ENCODE measurements at regions of chr3 and their contacts with region 1.

Region 1: DNA sequence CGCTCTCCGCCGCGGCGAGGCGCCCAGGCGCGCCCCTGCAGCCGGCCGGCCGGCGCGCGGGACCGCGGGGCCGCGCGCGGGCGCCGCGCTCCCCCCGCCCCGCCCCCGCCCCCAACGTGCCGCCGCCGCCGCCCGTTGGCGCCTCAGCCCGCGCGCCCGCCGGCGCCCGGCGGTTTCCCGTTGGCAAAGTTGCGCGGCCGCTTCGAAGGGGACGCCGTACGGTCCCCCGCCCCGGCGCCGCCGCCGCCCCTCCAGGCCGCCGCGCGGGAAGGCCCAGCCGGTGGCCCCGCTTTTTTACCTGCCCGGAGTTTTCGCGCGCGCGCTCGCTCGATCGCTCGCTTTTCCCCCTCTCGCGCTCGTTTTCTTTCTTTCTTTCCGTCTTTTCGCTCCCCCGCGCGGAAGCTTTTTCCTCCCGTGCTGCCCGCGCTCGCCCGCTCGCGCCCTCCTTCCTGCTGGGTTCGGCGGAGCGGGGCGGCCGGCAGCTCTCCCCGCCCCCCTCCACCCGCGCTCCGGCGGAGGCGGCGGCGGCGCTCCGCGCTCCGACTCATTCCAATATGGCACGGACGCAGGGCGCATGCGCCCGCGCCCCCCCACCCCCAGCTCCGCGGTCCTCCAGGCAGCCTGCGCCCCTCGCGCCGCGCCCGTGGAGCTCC is at the start of gene SFMBT1:
- DNase-seq: peak in 8 of 9 donors; percentile 53 to 75 (median 72)
- ATAC-seq: peak; percentile 71
- H3K4me3 ChIP-seq: peak within 1 kb of the TSS; percentile 77
- H3K4me3 Mint-ChIP-seq: peak within 1 kb of the TSS; percentile 92 to 100 (median 97)
- H3K27ac ChIP-seq: peak within 1 kb of the TSS; percentile 86
- H3K27ac Mint-ChIP-seq: peak within 1 kb of the TSS; percentile 91 to 100 (median 99)
- H3K4me1 ChIP-seq: peaks cover 9 to 23% of the 10 kb centered on the region in 2 donors
- H3K4me1 Mint-ChIP-seq: peaks cover 17 to 53% (median 42%) of the 10 kb centered on the region in 7 donors
- H3K27me3 ChIP-seq: no peaks in the 10 kb centered on the region
- H3K27me3 Mint-ChIP-seq: peaks cover 0 to 17% (median 0%) of the 10 kb centered on the region in 5 donors
- total RNA-seq, gene SFMBT1: 28.4 to 47.1 (median 39.0) TPM

Region 2: DNA sequence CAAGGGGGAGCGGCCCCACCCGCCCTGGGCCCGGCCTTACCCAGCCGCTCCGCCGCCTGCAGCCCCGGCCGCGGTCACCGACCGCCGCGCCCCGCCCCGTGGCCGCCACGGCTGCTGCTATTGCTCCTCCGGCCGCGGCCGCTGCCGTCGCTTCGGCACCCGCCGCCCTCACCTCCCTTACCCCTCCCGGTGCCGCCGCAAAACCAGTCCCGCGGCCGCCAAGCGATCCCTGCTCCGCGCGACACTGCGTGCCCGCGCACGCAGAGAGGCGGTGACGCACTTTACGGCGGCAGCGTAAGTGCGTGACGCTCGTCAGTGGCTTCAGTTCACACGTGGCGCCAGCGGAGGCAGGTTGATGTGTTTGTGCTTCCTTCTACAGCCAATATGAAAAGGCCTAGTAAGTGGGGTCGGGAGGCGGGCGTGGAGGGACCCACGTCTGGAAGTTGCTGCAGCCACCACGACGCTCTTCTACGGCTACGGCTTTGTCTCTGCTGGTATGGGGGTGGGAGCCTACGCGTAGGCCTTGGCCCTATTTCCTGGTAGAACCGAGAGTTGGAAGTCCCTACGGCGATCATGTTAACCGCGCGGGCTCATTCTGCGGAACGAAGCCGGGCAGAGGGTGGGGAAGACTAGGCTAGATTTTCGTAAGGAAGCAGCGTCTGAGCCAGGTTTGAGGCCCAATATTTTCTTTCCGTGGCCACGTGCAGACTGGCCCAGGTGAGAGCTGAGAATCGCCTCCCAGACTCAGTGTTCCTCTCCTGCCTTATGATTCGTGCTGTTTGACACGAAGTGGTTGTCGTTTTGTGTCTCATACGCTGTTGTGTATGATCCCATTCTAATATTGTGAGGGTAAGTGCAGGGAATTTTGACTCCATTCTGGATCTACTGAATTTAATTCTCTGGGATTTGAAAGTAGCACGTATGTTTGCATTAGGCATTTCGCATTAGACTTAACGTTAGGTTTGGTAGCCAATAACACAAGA is 359.6 kb before region 1 on chr3 and contains the starts of genes GNL3 and PBRM1:
- CTCF ChIA-PET with region 1: no interaction called
- POLR2A ChIA-PET with region 1: interaction called, 7 read pairs
- intact Hi-C with region 1: loop called in 1 of 2 experiments (anchors 2 kb)
- DNase-seq: peak; percentile 87 to 94 (median 92)
- ATAC-seq: peak; percentile 96
- H3K4me3 ChIP-seq: peak within 1 kb of the TSS; percentile 80
- H3K4me3 Mint-ChIP-seq: peak within 1 kb of the TSS; percentile 95 to 99 (median 98)
- H3K27ac ChIP-seq: peak within 1 kb of the TSS; percentile 89
- H3K27ac Mint-ChIP-seq: peak within 1 kb of the TSS; percentile 93 to 99 (median 98)
- H3K4me1 ChIP-seq: peaks cover 21 to 25% of the 10 kb centered on the region in 2 donors
- H3K4me1 Mint-ChIP-seq: peaks cover 23 to 72% (median 62%) of the 10 kb centered on the region in 7 donors
- H3K27me3 ChIP-seq: no peaks in the 10 kb centered on the region
- H3K27me3 Mint-ChIP-seq: no peaks in the 10 kb centered on the region
- total RNA-seq, gene GNL3: 87.9 to 116 (median 97.2) TPM
- total RNA-seq, gene PBRM1: 58.4 to 83.8 (median 74.2) TPM

Region 3: GRCh38 chr3:52770496-52771333 is 274.9 kb before region 1 on chr3 and contains the start of gene NEK4:
- CTCF ChIA-PET with region 1: no interaction called
- POLR2A ChIA-PET with region 1: interaction called, 8 read pairs
- intact Hi-C with region 1: loop called (anchors 1 to 10 kb)
- DNase-seq: peak; percentile 44 to 86 (median 65)
- ATAC-seq: peak; percentile 89
- H3K4me3 ChIP-seq: peak within 1 kb of the TSS; percentile 83
- H3K4me3 Mint-ChIP-seq: peak within 1 kb of the TSS; percentile 83 to 99 (median 95)
- H3K27ac ChIP-seq: peak within 1 kb of the TSS; percentile 72
- H3K27ac Mint-ChIP-seq: peak within 1 kb of the TSS; percentile 89 to 97 (median 93)
- H3K4me1 ChIP-seq: peaks cover 5 to 16% of the 10 kb centered on the region in 2 donors
- H3K4me1 Mint-ChIP-seq: peaks cover 12 to 34% (median 23%) of the 10 kb centered on the region in 7 donors
- H3K27me3 ChIP-seq: no peaks in the 10 kb centered on the region
- H3K27me3 Mint-ChIP-seq: peaks cover 0 to 12% (median 0%) of the 10 kb centered on the region in 5 donors
- total RNA-seq, gene NEK4: 14.4 to 28.4 (median 21.1) TPM

Region 4: GRCh38 chr3:52934630-52935530 is 110.8 kb before region 1 on chr3:
- CTCF ChIA-PET with region 1: interaction called, 5 read pairs
- POLR2A ChIA-PET with region 1: interaction called, 9 read pairs
- intact Hi-C with region 1: loop called (anchors 1 to 10 kb)
- DNase-seq: peak in 8 of 9 donors; percentile 30 to 58 (median 45)
- ATAC-seq: peak; percentile 97
- H3K4me3 ChIP-seq: no peak overlapping the region
- H3K4me3 Mint-ChIP-seq: peak overlapping the region in 4 of 10 donors; percentile 13 to 69 (median 27)
- H3K27ac ChIP-seq: no peak overlapping the region
- H3K27ac Mint-ChIP-seq: peak overlapping the region in 8 of 9 donors; percentile 7 to 75 (median 53)
- H3K4me1 ChIP-seq: peaks cover 0 to 4% of the 10 kb centered on the region in 2 donors
- H3K4me1 Mint-ChIP-seq: peaks cover 5 to 25% (median 16%) of the 10 kb centered on the region in 7 donors
- H3K27me3 ChIP-seq: no peaks in the 10 kb centered on the region
- H3K27me3 Mint-ChIP-seq: no peaks in the 10 kb centered on the region

Region 5: GRCh38 chr3:52983336-52983807 is 62.3 kb before region 1 on chr3:
- CTCF ChIA-PET with region 1: interaction called, 6 read pairs
- POLR2A ChIA-PET with region 1: interaction called, 79 read pairs
- intact Hi-C with region 1: loop called (anchors 1 kb)
- DNase-seq: peak in 8 of 9 donors; percentile 71 to 94 (median 88)
- ATAC-seq: peak; percentile 96
- H3K4me3 ChIP-seq: no peak overlapping the region
- H3K4me3 Mint-ChIP-seq: peak overlapping the region; percentile 52 to 86 (median 75)
- H3K27ac ChIP-seq: peak overlapping the region; percentile 25
- H3K27ac Mint-ChIP-seq: peak overlapping the region; percentile 76 to 97 (median 88)
- H3K4me1 ChIP-seq: peaks cover 16 to 27% of the 10 kb centered on the region in 2 donors
- H3K4me1 Mint-ChIP-seq: peaks cover 30 to 73% (median 47%) of the 10 kb centered on the region in 7 donors
- H3K27me3 ChIP-seq: no peaks in the 10 kb centered on the region
- H3K27me3 Mint-ChIP-seq: no peaks in the 10 kb centered on the region

Region 6: GRCh38 chr3:53030619-53031449 is 14.8 kb before region 1 on chr3:
- CTCF ChIA-PET with region 1: interaction called, 5 read pairs
- POLR2A ChIA-PET with region 1: interaction called, 102 read pairs
- intact Hi-C with region 1: loop called in 1 of 2 experiments (anchors 1 kb)
- DNase-seq: peak in 7 of 9 donors; percentile 23 to 53 (median 49)
- ATAC-seq: peak; percentile 84
- H3K4me3 ChIP-seq: peak overlapping the region; percentile 20
- H3K4me3 Mint-ChIP-seq: peak overlapping the region; percentile 56 to 83 (median 72)
- H3K27ac ChIP-seq: peak overlapping the region; percentile 56
- H3K27ac Mint-ChIP-seq: peak overlapping the region; percentile 54 to 93 (median 89)
- H3K4me1 ChIP-seq: peaks cover 12 to 43% of the 10 kb centered on the region in 2 donors
- H3K4me1 Mint-ChIP-seq: peaks cover 18 to 86% (median 64%) of the 10 kb centered on the region in 7 donors
- H3K27me3 ChIP-seq: no peaks in the 10 kb centered on the region
- H3K27me3 Mint-ChIP-seq: no peaks in the 10 kb centered on the region